Heart left ventricle (tissue), 16 donors: ENCODE measurements at regions of chr1 and their contacts with region 1.

Region 1: DNA sequence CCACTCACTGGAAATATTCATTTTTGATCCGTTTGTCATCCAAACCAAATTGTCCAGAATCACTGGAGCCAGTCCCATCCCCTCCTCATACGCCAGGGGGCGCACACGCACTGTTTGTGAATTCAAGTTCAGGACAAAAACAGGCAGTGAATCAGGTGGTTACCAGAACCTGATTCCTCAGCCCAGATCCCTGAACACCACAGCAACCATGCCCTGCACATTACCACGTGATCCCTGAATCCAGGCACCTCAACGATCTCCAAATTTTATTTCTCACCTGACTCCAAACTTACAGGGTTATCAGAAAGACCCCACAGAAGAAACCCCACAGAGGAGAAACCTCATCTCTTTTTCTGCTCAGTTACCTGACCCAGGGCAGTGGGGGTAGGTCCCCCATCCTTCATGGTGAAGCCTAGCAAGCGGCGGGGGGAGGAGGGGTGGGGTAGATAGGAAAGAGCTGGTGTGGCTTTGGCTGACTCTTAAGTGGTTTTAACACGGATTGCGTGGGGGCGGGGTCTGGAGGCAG is 1.4 kb upstream of the PTPRF start:
- DNase-seq: peak; percentile 74 to 89 (median 79)
- ATAC-seq: peak; percentile 62 to 77 (median 75)
- H3K4me3 ChIP-seq: no peak overlapping the region
- H3K27ac ChIP-seq: peak overlapping the region in 1 of 12 donors; percentile 88
- H3K4me1 ChIP-seq: peaks cover 0 to 24% (median 4%) of the 10 kb centered on the region in 12 donors
- H3K27me3 ChIP-seq: peaks cover 0 to 27% (median 0%) of the 10 kb centered on the region in 9 donors
- CTCF ChIP-seq: peak; percentile 91 to 97 (median 95)
- POLR2A ChIP-seq: no peak

Region 2: GRCh38 chr1:43227143-43227764 is 302.0 kb before region 1 on chr1:
- intact Hi-C with region 1: loop called in 3 of 10 experiments (anchors 5 to 10 kb)
- DNase-seq: peak; percentile 74 to 87 (median 79)
- ATAC-seq: peak; percentile 77 to 86 (median 83)
- H3K4me3 ChIP-seq: no peak overlapping the region
- H3K27ac ChIP-seq: no peak overlapping the region
- H3K4me1 ChIP-seq: peaks cover 0 to 9% (median under 1%) of the 10 kb centered on the region in 12 donors
- H3K27me3 ChIP-seq: no peaks in the 10 kb centered on the region
- CTCF ChIP-seq: peak; percentile 88 to 98 (median 94)
- POLR2A ChIP-seq: no peak

Region 3: GRCh38 chr1:43650310-43651085 is 121.2 kb after region 1 on chr1:
- intact Hi-C with region 1: loop called (anchors 2 to 10 kb)
- DNase-seq: peak; percentile 94 to 97 (median 97)
- ATAC-seq: peak; percentile 86 to 92 (median 92)
- H3K4me3 ChIP-seq: peak overlapping the region; percentile 65 to 92 (median 82)
- H3K27ac ChIP-seq: peak overlapping the region in 11 of 12 donors; percentile 87 to 97 (median 94)
- H3K4me1 ChIP-seq: peaks cover 8 to 35% (median 15%) of the 10 kb centered on the region in 12 donors
- H3K27me3 ChIP-seq: no peaks in the 10 kb centered on the region
- CTCF ChIP-seq: no peak
- POLR2A ChIP-seq: peak; percentile 89 to 97

Region 4: DNA sequence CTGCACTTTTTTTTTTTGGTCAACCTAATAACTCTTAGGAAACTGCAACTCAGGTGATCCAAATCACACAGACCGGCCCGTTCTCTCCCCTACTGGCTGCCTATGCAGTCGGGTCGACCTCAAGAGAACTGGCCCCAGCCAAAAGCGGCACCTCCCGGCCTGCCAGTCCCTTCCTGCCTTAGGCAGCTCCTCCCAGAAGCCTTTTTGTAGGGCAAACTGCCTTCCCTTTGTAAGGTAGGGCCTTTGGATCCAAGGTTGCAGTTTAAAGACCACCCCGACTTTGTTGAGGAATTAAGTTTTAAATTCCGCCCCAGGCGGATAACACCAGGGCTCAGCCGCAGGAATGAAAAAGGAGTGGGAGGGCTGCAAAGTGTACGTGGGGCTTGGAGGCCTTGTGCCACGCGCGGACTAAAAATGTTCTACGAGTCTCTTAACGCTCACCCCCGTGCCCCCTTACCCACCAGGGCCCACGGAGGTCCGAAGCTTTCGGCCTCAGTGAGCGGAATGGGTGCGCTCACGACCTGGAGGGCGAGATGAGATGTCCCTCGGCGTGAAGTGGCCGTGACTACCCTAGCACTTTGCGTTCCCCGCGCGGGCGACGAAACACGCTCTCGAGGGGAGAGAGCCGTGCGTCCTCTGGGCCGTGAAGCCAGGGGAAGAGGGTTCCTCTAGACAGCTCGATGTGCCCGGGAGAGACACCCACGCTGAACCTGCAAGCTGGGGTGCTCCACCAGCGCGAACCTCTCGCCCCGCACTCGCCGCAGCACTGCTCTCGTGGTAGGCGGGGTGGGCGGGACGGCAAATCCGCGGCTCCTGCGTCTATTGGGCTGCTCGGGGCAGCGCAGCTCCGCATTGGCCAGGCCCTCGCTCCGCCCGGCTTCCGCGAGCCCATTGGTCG is 177.6 kb after region 1 on chr1:
- intact Hi-C with region 1: loop called in 1 of 10 experiments (anchors 5 kb)
- DNase-seq: peak; percentile 92 to 95 (median 94)
- ATAC-seq: peak; percentile 97 to 99 (median 98)
- H3K4me3 ChIP-seq: peak overlapping the region; percentile 71 to 95 (median 86)
- H3K27ac ChIP-seq: peak overlapping the region in 10 of 12 donors; percentile 74 to 90 (median 84)
- H3K4me1 ChIP-seq: peaks cover 0 to 42% (median 17%) of the 10 kb centered on the region in 12 donors
- H3K27me3 ChIP-seq: no peaks in the 10 kb centered on the region
- CTCF ChIP-seq: no peak
- POLR2A ChIP-seq: peak in 1 of 2 donors; percentile 58

Region 5: GRCh38 chr1:43763497-43763973 is 234.3 kb after region 1 on chr1:
- intact Hi-C with region 1: loop called in 4 of 10 experiments (anchors 2 to 10 kb)
- DNase-seq: peak in 4 of 5 donors; percentile 67 to 74 (median 70)
- ATAC-seq: peak; percentile 85 to 97 (median 94)
- H3K4me3 ChIP-seq: no peak overlapping the region
- H3K27ac ChIP-seq: no peak overlapping the region
- H3K4me1 ChIP-seq: peaks cover 0 to 16% (median 7%) of the 10 kb centered on the region in 12 donors
- H3K27me3 ChIP-seq: no peaks in the 10 kb centered on the region
- CTCF ChIP-seq: peak; percentile 67 to 91 (median 82)
- POLR2A ChIP-seq: no peak

Region 6: DNA sequence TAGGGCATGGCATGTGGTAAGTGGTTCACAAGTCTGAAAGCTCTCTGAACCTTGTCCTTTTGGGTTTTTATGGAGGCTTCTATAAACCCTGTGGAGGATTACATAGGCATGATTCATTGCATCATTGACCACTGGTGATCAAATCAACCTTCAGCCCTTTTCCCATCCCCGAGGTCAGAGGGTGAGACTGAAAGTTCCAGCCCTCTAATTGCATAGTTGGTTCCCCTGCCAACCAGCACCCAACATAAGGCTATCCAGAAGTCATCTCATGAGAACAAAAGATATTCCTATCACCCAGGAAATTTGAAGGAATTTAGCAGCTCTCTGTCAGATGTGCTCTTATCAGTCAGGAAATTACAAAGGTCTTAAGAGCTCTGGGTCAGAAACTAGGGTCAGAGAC is 314.8 kb after region 1 on chr1:
- intact Hi-C with region 1: no loop called
- DNase-seq: no peak
- ATAC-seq: no peak
- H3K4me3 ChIP-seq: no peak overlapping the region
- H3K27ac ChIP-seq: no peak overlapping the region
- H3K4me1 ChIP-seq: peaks cover 0 to 9% (median 0%) of the 10 kb centered on the region in 12 donors
- H3K27me3 ChIP-seq: no peaks in the 10 kb centered on the region
- CTCF ChIP-seq: no peak
- POLR2A ChIP-seq: no peak

Region 7: DNA sequence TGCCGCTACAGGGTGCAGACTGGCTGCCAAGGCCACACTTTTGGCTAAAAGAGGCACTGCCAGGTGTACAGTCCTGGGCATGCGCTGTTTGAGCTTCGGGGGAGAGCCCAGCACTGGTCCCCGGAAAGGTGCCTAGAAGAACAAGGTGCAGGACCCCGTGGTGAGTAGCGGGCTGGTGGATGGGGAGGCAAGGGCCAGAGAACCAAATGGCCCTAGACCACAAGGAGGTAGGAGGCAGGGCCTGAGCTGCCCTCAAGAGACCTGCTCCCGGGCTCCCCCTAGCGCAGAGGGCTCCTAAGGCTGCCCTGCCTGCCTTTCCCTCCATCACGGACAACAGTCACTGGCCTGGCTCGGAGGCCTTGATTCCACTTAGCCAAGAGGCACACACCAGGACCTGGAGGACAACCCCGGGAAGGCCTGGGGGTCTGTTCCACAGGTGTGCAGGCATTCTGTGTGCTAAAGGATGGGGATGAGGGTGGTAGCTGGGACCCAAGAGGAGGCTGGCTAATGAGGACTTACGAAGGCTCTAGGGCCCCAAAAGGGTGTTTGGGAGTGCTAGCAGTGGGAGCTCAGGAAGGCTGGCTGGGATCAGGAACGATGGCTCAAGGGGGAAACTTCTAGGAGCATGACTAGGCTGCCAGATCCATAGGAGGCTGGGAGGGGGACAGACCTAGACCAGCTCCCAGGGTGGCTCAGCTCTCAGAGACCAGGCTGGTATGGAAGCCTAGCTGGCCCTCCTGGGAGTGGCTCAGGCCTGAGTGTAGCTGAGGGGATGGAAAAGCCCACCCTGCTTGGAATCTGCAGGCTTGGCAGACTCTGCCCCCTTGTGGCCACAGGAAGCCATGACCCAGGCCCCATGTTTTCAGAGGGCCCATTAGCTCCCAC is 405.1 kb after region 1 on chr1:
- intact Hi-C with region 1: loop called in 5 of 10 experiments (anchors 2 to 10 kb)
- DNase-seq: peak; percentile 52 to 82 (median 60)
- ATAC-seq: peak in 3 of 4 donors; percentile 51 to 73 (median 66)
- H3K4me3 ChIP-seq: peak overlapping the region in 6 of 12 donors; percentile 33 to 46 (median 41)
- H3K27ac ChIP-seq: no peak overlapping the region
- H3K4me1 ChIP-seq: peaks cover 3 to 32% (median 19%) of the 10 kb centered on the region in 12 donors
- H3K27me3 ChIP-seq: peaks cover 3 to 23% (median 9%) of the 10 kb centered on the region in 9 donors
- CTCF ChIP-seq: peak; percentile 77 to 88 (median 80)
- POLR2A ChIP-seq: no peak

Region 8: DNA sequence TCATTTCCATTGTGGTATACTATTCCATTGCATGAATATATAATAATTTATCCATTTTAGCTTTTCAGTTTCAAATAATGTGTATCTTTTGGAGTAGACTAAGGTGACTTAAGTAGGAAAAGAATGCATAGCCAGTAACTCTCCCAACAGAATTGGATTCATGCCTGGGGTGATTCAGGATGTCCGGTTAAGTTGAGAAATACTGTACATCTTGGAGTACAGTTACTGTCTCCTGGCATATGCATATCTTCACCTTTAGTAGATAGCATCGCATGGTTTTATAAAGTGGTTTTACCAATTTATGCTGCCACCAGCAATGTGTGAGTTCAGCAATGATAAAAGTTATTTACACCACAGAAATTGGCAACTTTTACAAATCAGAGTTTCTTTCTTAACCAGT is 520.6 kb after region 1 on chr1:
- intact Hi-C with region 1: loop called (anchors 2 to 10 kb)
- DNase-seq: no peak
- ATAC-seq: no peak
- H3K4me3 ChIP-seq: no peak overlapping the region
- H3K27ac ChIP-seq: peak overlapping the region in 1 of 12 donors; percentile 54
- H3K4me1 ChIP-seq: peaks cover 0 to 33% (median 0%) of the 10 kb centered on the region in 12 donors
- H3K27me3 ChIP-seq: no peaks in the 10 kb centered on the region
- CTCF ChIP-seq: no peak
- POLR2A ChIP-seq: no peak